Activated CD8-positive, alpha-beta T cell treated with anti-CD3 and anti-CD28 coated beads for 36 hours (primary cell): ENCODE measurements at regions of chr11 and their contacts with region 1.

Region 1: GRCh38 chr11:71928737-71929452 is at the start of gene RNF121:
- DNase-seq: peak; percentile 100
- ATAC-seq: peak; percentile 88
- H3K4me3 Mint-ChIP-seq: peak within 1 kb of the TSS; percentile 95
- H3K27ac Mint-ChIP-seq: peak within 1 kb of the TSS; percentile 99
- H3K4me1 Mint-ChIP-seq: peaks cover 44% of the 10 kb centered on the region
- H3K27me3 Mint-ChIP-seq: no peaks in the 10 kb centered on the region
- CTCF ChIP-seq: no peak
- total RNA-seq, gene RNF121: 23.7 to 28.1 TPM

Region 2: DNA sequence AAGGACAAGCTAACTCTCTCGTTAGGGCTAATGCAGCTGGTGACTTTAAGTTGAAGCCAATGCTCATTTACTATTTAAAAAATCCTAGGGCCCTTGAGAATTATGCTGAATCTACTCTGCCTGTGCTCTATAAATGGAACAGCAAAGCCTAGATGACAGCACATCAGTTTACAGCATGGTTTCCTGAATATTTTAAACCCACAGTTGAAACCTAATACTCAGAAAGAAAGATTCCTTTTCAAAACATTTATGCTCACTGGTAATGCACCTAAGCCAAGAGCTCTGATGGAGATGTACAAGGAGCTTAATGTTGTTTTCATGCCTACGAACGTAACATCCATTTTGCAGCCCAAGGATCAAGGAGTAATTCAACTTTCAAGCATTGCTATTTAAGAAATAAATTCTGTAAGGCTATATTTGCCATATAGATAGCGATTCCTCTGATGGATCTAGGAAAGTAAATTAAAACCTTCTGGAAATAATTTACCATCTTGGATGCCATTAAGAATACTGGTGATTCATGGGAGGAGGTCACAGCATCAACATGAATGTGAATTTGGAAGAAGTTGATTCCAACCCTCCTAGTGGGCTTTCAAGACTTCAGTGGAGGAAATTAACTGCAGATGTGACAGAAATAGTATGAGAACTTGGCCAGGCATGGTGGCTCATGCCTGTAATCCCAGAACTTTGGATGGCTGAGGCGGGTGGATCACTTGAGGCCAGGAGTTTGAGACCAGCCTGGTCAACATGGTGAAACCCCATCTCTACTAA is 15.0 kb before region 1 on chr11:
- CTCF ChIA-PET with region 1: interaction called, 5 read pairs
- POLR2A ChIA-PET with region 1: interaction called, 14 read pairs
- intact Hi-C with region 1: no loop called
- DNase-seq: no peak
- ATAC-seq: no peak
- H3K4me3 Mint-ChIP-seq: no peak overlapping the region
- H3K27ac Mint-ChIP-seq: no peak overlapping the region
- H3K4me1 Mint-ChIP-seq: peaks cover 12% of the 10 kb centered on the region
- H3K27me3 Mint-ChIP-seq: no peaks in the 10 kb centered on the region
- CTCF ChIP-seq: no peak

Region 3: DNA sequence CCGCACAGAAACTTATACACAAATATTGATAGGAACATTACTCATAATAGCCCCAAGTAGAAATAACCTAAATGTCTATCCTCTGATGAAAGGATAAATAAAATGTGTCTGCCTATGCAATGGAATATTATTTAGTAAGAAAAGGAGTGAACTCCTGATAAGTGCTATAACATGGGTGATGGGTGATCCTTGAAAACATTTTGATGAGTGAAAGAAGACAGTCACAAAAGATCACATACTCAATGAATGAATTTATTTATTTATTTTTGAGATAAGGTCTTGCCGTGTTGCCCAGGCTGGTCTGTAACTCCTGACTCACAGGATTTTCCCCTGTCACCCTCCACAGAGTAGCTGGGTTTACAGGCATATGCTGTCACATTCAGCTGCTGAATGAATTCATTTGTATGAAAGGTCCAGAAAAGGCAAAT is 17.3 kb after region 1 on chr11:
- CTCF ChIA-PET with region 1: no interaction called
- POLR2A ChIA-PET with region 1: interaction called, 16 read pairs
- intact Hi-C with region 1: no loop called
- DNase-seq: no peak
- ATAC-seq: peak; percentile 56
- H3K4me3 Mint-ChIP-seq: no peak overlapping the region
- H3K27ac Mint-ChIP-seq: no peak overlapping the region
- H3K4me1 Mint-ChIP-seq: peaks cover 14% of the 10 kb centered on the region
- H3K27me3 Mint-ChIP-seq: no peaks in the 10 kb centered on the region
- CTCF ChIP-seq: no peak

Region 4: DNA sequence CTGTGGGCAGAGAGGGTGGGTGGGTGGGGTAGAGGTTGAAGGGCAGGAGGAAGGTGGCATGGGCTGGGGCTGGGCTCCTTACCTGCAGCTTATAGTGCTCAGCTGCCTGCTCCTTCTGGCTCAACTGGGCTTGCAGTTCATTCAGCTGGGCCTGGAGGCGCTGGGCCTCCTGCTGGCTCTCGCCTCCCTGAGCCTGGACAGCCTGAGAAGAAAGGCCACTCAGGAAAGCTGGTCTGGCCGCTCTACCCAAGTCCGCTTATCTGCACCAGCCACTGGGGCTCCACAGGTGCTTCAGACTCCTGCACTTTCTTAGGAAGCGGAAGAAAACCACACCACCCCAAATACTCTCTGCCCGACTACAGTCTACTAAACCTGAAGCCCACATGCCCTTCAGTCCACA is 80.3 kb after region 1 on chr11:
- CTCF ChIA-PET with region 1: no interaction called
- POLR2A ChIA-PET with region 1: no interaction called
- intact Hi-C with region 1: no loop called
- DNase-seq: no peak
- ATAC-seq: no peak
- H3K4me3 Mint-ChIP-seq: no peak overlapping the region
- H3K27ac Mint-ChIP-seq: no peak overlapping the region
- H3K4me1 Mint-ChIP-seq: no peaks in the 10 kb centered on the region
- H3K27me3 Mint-ChIP-seq: no peaks in the 10 kb centered on the region
- CTCF ChIP-seq: no peak

Region 5: GRCh38 chr11:72069787-72070251 is 140.9 kb after region 1 on chr11:
- CTCF ChIA-PET with region 1: no interaction called
- POLR2A ChIA-PET with region 1: no interaction called
- intact Hi-C with region 1: no loop called
- DNase-seq: no peak
- ATAC-seq: no peak
- H3K4me3 Mint-ChIP-seq: no peak overlapping the region
- H3K27ac Mint-ChIP-seq: peak overlapping the region; percentile 33
- H3K4me1 Mint-ChIP-seq: peaks cover 36% of the 10 kb centered on the region
- H3K27me3 Mint-ChIP-seq: no peaks in the 10 kb centered on the region
- CTCF ChIP-seq: no peak